ENCODE measurements at regions of chr22 and their contacts with region 1.

Region 1: GRCh38 chr22:19730655-19731360 is 7.5 kb downstream of the GP1BB start:
- DNase-seq: peak; percentile 69 to 93
- H3K4me3 ChIP-seq: peak overlapping the region; percentile 38
- H3K4me1 ChIP-seq: no peaks in the 10 kb centered on the region
- H3K27me3 ChIP-seq: peaks cover 13% of the 10 kb centered on the region

Region 2: GRCh38 chr22:19166421-19166820 is 564.4 kb before region 1 on chr22:
- in situ Hi-C with region 1: no loop called
- DNase-seq: no peak
- H3K4me3 ChIP-seq: no peak overlapping the region
- H3K4me1 ChIP-seq: peaks cover 15% of the 10 kb centered on the region
- H3K27me3 ChIP-seq: peaks cover 20% of the 10 kb centered on the region

Region 3: GRCh38 chr22:19776433-19777031 is 45.7 kb after region 1 on chr22:
- in situ Hi-C with region 1: no loop called
- DNase-seq: no peak
- H3K4me3 ChIP-seq: no peak overlapping the region
- H3K4me1 ChIP-seq: peaks cover 8% of the 10 kb centered on the region
- H3K27me3 ChIP-seq: no peaks in the 10 kb centered on the region

Region 4: GRCh38 chr22:19909350-19910179 is 178.8 kb after region 1 on chr22:
- in situ Hi-C with region 1: loop called (anchors 5 kb)
- DNase-seq: peak; percentile 72 to 93
- H3K4me3 ChIP-seq: no peak overlapping the region
- H3K4me1 ChIP-seq: no peaks in the 10 kb centered on the region
- H3K27me3 ChIP-seq: no peaks in the 10 kb centered on the region

Region 5: DNA sequence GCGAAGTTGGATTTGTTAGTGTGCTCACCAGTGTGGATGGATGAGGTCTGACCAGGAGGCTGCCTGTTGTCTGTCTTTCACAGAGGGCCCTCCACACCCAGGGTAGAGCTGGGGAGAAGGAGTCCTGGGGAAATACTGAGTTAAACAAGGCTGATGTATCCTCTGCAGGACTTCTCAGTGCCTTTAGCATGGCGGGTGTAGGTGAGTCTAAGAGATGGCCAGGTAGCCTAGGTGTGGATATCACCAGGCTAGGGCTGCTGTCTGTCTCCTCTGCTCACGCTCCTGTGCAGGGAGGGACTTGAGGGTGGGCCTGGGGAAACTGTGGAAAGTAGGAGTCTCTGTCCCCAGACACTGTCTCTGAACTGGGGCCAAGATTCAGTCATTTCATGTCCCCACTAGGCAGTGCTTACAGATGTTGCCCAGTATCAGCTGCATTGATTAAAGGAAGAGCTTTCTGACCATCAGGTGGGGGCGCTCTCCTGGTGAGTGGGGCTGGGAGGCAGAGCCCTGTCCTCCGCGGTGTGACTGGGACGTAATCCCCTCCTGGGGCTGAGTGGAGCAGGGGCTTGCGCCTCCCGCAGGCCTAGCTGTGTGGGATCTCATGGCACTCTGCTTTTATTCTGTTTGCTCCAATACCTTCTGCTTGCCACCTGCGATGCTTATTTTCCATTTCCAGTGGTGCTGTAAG is 455.5 kb after region 1 on chr22:
- in situ Hi-C with region 1: no loop called
- DNase-seq: peak; percentile 18 to 76
- H3K4me3 ChIP-seq: no peak overlapping the region
- H3K4me1 ChIP-seq: no peaks in the 10 kb centered on the region
- H3K27me3 ChIP-seq: no peaks in the 10 kb centered on the region

Region 6: DNA sequence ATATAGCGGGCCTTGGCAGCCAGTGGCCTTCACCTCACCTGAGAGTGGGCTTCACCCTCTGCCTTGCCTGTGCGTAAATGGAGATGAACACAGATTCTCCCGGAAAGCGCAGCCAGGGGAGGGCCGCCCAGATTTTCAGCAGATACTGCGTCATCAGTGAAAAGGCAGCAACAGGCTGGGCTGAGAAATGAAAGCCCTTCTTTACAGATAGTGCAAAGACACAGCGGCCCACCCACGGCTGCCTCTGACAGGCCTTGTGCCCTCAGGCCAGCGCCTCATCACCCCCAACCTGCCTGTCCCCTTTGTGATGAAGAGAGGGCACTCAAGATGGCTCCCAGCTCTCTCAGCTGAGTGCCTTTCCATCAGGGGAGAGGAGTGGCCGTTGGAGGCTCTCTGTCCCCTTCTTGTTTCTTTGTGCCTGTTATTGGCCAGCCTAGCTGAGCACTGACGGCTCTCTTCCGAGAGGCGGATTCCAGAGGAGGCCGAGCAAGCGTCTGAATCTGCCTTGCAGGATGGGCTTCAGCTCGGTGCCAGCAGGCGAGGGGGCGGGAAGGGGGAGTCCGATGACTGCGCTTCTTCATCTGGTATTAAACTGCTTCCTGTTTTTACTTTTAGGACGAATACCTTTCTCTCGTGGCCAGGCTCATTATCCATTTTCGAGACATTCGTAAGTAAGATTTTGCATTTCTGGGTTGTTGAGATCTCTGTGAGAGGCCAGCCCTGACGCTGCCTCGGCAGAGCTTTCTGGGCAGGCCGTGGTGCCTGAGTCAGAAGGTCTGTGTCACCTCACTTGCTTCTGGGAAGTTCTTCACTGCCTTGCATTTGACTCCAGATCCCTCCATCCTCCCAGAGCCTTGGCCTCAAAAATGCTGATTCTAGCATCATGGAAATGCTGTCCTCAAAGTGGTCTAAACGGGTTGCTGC is 820.3 kb after region 1 on chr22:
- in situ Hi-C with region 1: no loop called
- DNase-seq: no peak
- H3K4me3 ChIP-seq: no peak overlapping the region
- H3K4me1 ChIP-seq: no peaks in the 10 kb centered on the region
- H3K27me3 ChIP-seq: no peaks in the 10 kb centered on the region

Measured in HAP-1 (cell line).